Mucosa of descending colon (tissue), 3 donors: ENCODE measurements at regions of chr5 and their contacts with region 1.

Region 1: GRCh38 chr5:149990518-149991376 is 9.7 kb downstream of the TIGD6 start:
- DNase-seq: peak in 2 of 3 donors; percentile 71 to 86
- ATAC-seq: peak; percentile 97
- H3K4me3 ChIP-seq: no peak overlapping the region
- H3K4me1 ChIP-seq: no peaks in the 10 kb centered on the region
- CTCF ChIP-seq: peak; percentile 82

Region 2: GRCh38 chr5:149636851-149637246 is 353.9 kb before region 1 on chr5:
- intact Hi-C with region 1: loop called (anchors 10 kb)
- DNase-seq: peak in 2 of 3 donors; percentile 92 to 95
- ATAC-seq: peak; percentile 28
- H3K4me3 ChIP-seq: no peak overlapping the region
- H3K4me1 ChIP-seq: peaks cover 28% of the 10 kb centered on the region
- CTCF ChIP-seq: peak; percentile 53

Region 3: GRCh38 chr5:149834246-149834855 is 156.4 kb before region 1 on chr5:
- intact Hi-C with region 1: loop called (anchors 10 kb)
- DNase-seq: peak in 1 of 3 donors; percentile 88
- ATAC-seq: peak; percentile 68
- H3K4me3 ChIP-seq: no peak overlapping the region
- H3K4me1 ChIP-seq: no peaks in the 10 kb centered on the region
- CTCF ChIP-seq: peak; percentile 16